K562 (cell line): ENCODE measurements at regions of chr9 and their contacts with region 1.

Region 1: GRCh38 chr9:6584881-6585597 is 60.5 kb downstream of the GLDC start:
- DNase-seq: peak in 1 of 4 experiments; percentile 13
- ATAC-seq: peak; percentile 49; the same call in 1 of the 3 replicates
- H3K4me3 ChIP-seq: no peak overlapping the region
- H3K27ac ChIP-seq: no peak overlapping the region
- H3K4me1 ChIP-seq: no peaks in the 10 kb centered on the region; a peak in 1 of 5 replicates
- H3K27me3 ChIP-seq: peaks cover 5 to 14% of the 10 kb centered on the region in 2 experiments; a peak in 3 of 5 replicates
- CTCF ChIP-seq: peak in 1 of 3 experiments; percentile 49; a peak in 2 of 6 replicates
- EP300 ChIP-seq: no peak
- POLR2A ChIP-seq: no peak
- RAD21 ChIP-seq: peak in 1 of 2 experiments; percentile 56; a peak in 3 of 4 replicates

Region 2: GRCh38 chr9:6471231-6471850 is 113.7 kb before region 1 on chr9:
- CTCF ChIA-PET with region 1: no interaction called
- POLR2A ChIA-PET with region 1: no interaction called
- in situ Hi-C with region 1: no loop called
- intact Hi-C with region 1: no loop called
- DNase-seq: peak in 1 of 4 experiments; percentile 5
- ATAC-seq: no peak; the same call in 1 of the 3 replicates
- H3K4me3 ChIP-seq: no peak overlapping the region
- H3K27ac ChIP-seq: no peak overlapping the region
- H3K4me1 ChIP-seq: no peaks in the 10 kb centered on the region; a peak in 1 of 5 replicates
- H3K27me3 ChIP-seq: no peaks in the 10 kb centered on the region
- CTCF ChIP-seq: no peak
- EP300 ChIP-seq: no peak
- POLR2A ChIP-seq: no peak
- RAD21 ChIP-seq: no peak

Region 3: GRCh38 chr9:6667633-6668280 is 82.7 kb after region 1 on chr9:
- CTCF ChIA-PET with region 1: no interaction called
- POLR2A ChIA-PET with region 1: no interaction called
- in situ Hi-C with region 1: no loop called
- intact Hi-C with region 1: loop called (anchors 5 kb)
- DNase-seq: peak; percentile 15 to 37 (median 24)
- ATAC-seq: peak; percentile 46; the same call in 1 of the 3 replicates
- H3K4me3 ChIP-seq: no peak overlapping the region
- H3K27ac ChIP-seq: no peak overlapping the region
- H3K4me1 ChIP-seq: no peaks in the 10 kb centered on the region; a peak in 2 of 5 replicates
- H3K27me3 ChIP-seq: no peaks in the 10 kb centered on the region
- CTCF ChIP-seq: peak; percentile 35 to 58 (median 36); a peak in 3 of 6 replicates
- EP300 ChIP-seq: no peak
- POLR2A ChIP-seq: no peak
- RAD21 ChIP-seq: peak; percentile 9 to 47; a peak in 2 of 4 replicates

Region 4: GRCh38 chr9:6739218-6739617 is 154.2 kb after region 1 on chr9:
- CTCF ChIA-PET with region 1: no interaction called
- POLR2A ChIA-PET with region 1: no interaction called
- in situ Hi-C with region 1: no loop called
- intact Hi-C with region 1: loop called (anchors 2 kb)
- DNase-seq: peak in 1 of 4 experiments; percentile 17
- ATAC-seq: peak; percentile 39; the same call in 1 of the 3 replicates
- H3K4me3 ChIP-seq: no peak overlapping the region
- H3K27ac ChIP-seq: no peak overlapping the region
- H3K4me1 ChIP-seq: no peaks in the 10 kb centered on the region
- H3K27me3 ChIP-seq: no peaks in the 10 kb centered on the region
- CTCF ChIP-seq: peak in 2 of 3 experiments; percentile 12 to 50; a peak in 3 of 6 replicates
- EP300 ChIP-seq: no peak
- POLR2A ChIP-seq: no peak
- RAD21 ChIP-seq: peak; percentile 36 to 58; a peak in 3 of 4 replicates